ENCODE measurements at regions of chr4 and their contacts with region 1.

Region 1: GRCh38 chr4:138035781-138036258 is 206.3 kb downstream of the SLC7A11 start:
- DNase-seq: no peak
- H3K4me3 ChIP-seq: no peak overlapping the region
- H3K27ac ChIP-seq: no peak overlapping the region
- H3K4me1 ChIP-seq: peaks cover 0 to 4% (median 0%) of the 10 kb centered on the region in 4 donors
- H3K27me3 ChIP-seq: no peaks in the 10 kb centered on the region
- CTCF ChIP-seq: peak; percentile 48 to 63 (median 54)
- EP300 ChIP-seq: no peak
- POLR2A ChIP-seq: no peak

Region 2: GRCh38 chr4:138090150-138090917 is 54.5 kb after region 1 on chr4:
- in situ Hi-C with region 1: no loop called
- intact Hi-C with region 1: loop called (anchors 5 kb)
- DNase-seq: peak; percentile 49
- H3K4me3 ChIP-seq: peak overlapping the region in 1 of 4 donors; percentile 21
- H3K27ac ChIP-seq: no peak overlapping the region
- H3K4me1 ChIP-seq: no peaks in the 10 kb centered on the region
- H3K27me3 ChIP-seq: no peaks in the 10 kb centered on the region
- CTCF ChIP-seq: peak; percentile 70 to 85 (median 79)
- EP300 ChIP-seq: no peak
- POLR2A ChIP-seq: no peak

Region 3: GRCh38 chr4:138174981-138175794 is 139.4 kb after region 1 on chr4:
- in situ Hi-C with region 1: loop called in 2 of 4 experiments (anchors 10 kb)
- intact Hi-C with region 1: no loop called
- DNase-seq: peak; percentile 19
- H3K4me3 ChIP-seq: no peak overlapping the region
- H3K27ac ChIP-seq: no peak overlapping the region
- H3K4me1 ChIP-seq: peaks cover 0 to 6% (median 3%) of the 10 kb centered on the region in 4 donors
- H3K27me3 ChIP-seq: no peaks in the 10 kb centered on the region
- CTCF ChIP-seq: peak in 2 of 5 experiments; percentile 6 to 20
- EP300 ChIP-seq: no peak
- POLR2A ChIP-seq: no peak

Region 4: GRCh38 chr4:138182838-138183426 is 147.1 kb after region 1 on chr4:
- in situ Hi-C with region 1: loop called in 2 of 4 experiments (anchors 10 kb)
- intact Hi-C with region 1: no loop called
- DNase-seq: no peak
- H3K4me3 ChIP-seq: no peak overlapping the region
- H3K27ac ChIP-seq: no peak overlapping the region
- H3K4me1 ChIP-seq: no peaks in the 10 kb centered on the region
- H3K27me3 ChIP-seq: no peaks in the 10 kb centered on the region
- CTCF ChIP-seq: peak; percentile 52 to 60 (median 57)
- EP300 ChIP-seq: no peak
- POLR2A ChIP-seq: no peak

Region 5: GRCh38 chr4:138439143-138439581 is 403.3 kb after region 1 on chr4:
- in situ Hi-C with region 1: no loop called
- intact Hi-C with region 1: no loop called
- DNase-seq: no peak
- H3K4me3 ChIP-seq: no peak overlapping the region
- H3K27ac ChIP-seq: no peak overlapping the region
- H3K4me1 ChIP-seq: no peaks in the 10 kb centered on the region
- H3K27me3 ChIP-seq: no peaks in the 10 kb centered on the region
- CTCF ChIP-seq: no peak
- EP300 ChIP-seq: no peak
- POLR2A ChIP-seq: no peak

Region 6: DNA sequence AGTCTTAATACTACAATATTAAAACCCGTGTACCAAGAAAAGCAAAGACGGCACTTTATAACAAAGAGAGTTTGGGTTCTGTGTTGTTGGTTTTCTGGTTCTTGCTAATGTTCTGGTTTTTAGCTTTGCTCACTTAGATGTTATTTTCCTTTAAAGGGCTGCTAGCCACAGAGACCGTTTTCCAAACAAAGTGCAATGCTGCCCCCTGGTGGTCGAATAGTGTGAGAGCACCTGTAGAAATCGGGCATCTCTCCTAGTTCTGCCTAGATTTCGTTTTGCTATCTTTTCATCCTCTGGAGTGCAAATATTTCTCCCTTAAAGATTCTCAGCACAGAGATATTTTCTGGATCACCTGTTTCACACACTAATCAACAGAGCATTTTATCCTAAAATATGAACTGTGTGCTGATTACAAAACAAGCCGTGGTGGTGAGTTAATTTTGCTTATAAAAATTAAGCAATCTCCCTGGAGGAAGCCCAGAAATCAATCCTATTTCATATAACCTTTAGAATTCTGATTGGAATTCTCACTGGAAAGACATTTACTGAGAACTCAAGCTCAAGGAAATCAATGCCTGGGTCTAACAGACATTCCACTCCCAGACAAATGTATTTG is 645.3 kb after region 1 on chr4:
- in situ Hi-C with region 1: loop called (anchors 10 to 25 kb)
- intact Hi-C with region 1: no loop called
- DNase-seq: peak; percentile 77
- H3K4me3 ChIP-seq: no peak overlapping the region
- H3K27ac ChIP-seq: no peak overlapping the region
- H3K4me1 ChIP-seq: no peaks in the 10 kb centered on the region
- H3K27me3 ChIP-seq: no peaks in the 10 kb centered on the region
- CTCF ChIP-seq: peak; percentile 85 to 94 (median 90)
- EP300 ChIP-seq: no peak
- POLR2A ChIP-seq: no peak

Region 7: GRCh38 chr4:138870737-138871554 is 835.1 kb after region 1 on chr4:
- in situ Hi-C with region 1: loop called in 2 of 4 experiments (anchors 25 kb)
- intact Hi-C with region 1: no loop called
- DNase-seq: peak; percentile 62
- H3K4me3 ChIP-seq: no peak overlapping the region
- H3K27ac ChIP-seq: no peak overlapping the region
- H3K4me1 ChIP-seq: peaks cover 0 to 6% (median 0%) of the 10 kb centered on the region in 4 donors
- H3K27me3 ChIP-seq: no peaks in the 10 kb centered on the region
- CTCF ChIP-seq: peak; percentile 80 to 85 (median 83)
- EP300 ChIP-seq: no peak
- POLR2A ChIP-seq: no peak